ENCODE measurements at regions of chr12 and their contacts with region 1.

Region 1: GRCh38 chr12:65209655-65210043 is 40.3 kb downstream of the LEMD3 start:
- DNase-seq: no peak
- H3K4me3 Mint-ChIP-seq: peak overlapping the region; percentile 43
- H3K27ac Mint-ChIP-seq: peak overlapping the region; percentile 69
- H3K4me1 Mint-ChIP-seq: peaks cover 63% of the 10 kb centered on the region
- H3K27me3 Mint-ChIP-seq: no peaks in the 10 kb centered on the region

Region 2: GRCh38 chr12:65147312-65147905 is 62.2 kb before region 1 on chr12:
- CTCF ChIA-PET with region 1: no interaction called
- intact Hi-C with region 1: no loop called
- DNase-seq: no peak
- H3K4me3 Mint-ChIP-seq: no peak overlapping the region
- H3K27ac Mint-ChIP-seq: no peak overlapping the region
- H3K4me1 Mint-ChIP-seq: no peaks in the 10 kb centered on the region
- H3K27me3 Mint-ChIP-seq: peaks cover 25% of the 10 kb centered on the region

Region 3: GRCh38 chr12:65196762-65197567 is 12.7 kb before region 1 on chr12:
- CTCF ChIA-PET with region 1: interaction called, 3 read pairs
- intact Hi-C with region 1: loop called (anchors 1 kb)
- DNase-seq: no peak
- H3K4me3 Mint-ChIP-seq: no peak overlapping the region
- H3K27ac Mint-ChIP-seq: peak overlapping the region; percentile 28
- H3K4me1 Mint-ChIP-seq: peaks cover 66% of the 10 kb centered on the region
- H3K27me3 Mint-ChIP-seq: no peaks in the 10 kb centered on the region

Region 4: DNA sequence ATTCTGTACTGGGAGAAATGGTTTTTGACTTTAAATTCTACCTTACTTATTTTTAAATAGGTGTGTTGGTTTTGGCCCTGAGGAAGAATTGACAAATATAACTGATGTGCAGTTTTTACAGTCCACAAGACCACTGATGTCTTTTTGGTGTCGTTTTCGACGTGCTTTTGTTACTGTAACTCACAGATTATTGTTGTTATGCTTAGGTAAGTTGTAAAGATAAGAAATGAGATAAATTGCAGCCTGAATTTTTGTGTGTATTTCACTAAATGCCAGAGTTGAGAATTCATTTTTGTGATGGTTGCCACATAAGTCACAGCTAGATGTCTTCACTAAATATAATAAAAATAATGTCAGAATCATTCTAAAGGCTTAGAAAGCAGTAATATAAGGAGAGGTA is 29.0 kb after region 1 on chr12:
- CTCF ChIA-PET with region 1: no interaction called
- intact Hi-C with region 1: no loop called
- DNase-seq: no peak
- H3K4me3 Mint-ChIP-seq: no peak overlapping the region
- H3K27ac Mint-ChIP-seq: no peak overlapping the region
- H3K4me1 Mint-ChIP-seq: no peaks in the 10 kb centered on the region
- H3K27me3 Mint-ChIP-seq: no peaks in the 10 kb centered on the region

Region 5: DNA sequence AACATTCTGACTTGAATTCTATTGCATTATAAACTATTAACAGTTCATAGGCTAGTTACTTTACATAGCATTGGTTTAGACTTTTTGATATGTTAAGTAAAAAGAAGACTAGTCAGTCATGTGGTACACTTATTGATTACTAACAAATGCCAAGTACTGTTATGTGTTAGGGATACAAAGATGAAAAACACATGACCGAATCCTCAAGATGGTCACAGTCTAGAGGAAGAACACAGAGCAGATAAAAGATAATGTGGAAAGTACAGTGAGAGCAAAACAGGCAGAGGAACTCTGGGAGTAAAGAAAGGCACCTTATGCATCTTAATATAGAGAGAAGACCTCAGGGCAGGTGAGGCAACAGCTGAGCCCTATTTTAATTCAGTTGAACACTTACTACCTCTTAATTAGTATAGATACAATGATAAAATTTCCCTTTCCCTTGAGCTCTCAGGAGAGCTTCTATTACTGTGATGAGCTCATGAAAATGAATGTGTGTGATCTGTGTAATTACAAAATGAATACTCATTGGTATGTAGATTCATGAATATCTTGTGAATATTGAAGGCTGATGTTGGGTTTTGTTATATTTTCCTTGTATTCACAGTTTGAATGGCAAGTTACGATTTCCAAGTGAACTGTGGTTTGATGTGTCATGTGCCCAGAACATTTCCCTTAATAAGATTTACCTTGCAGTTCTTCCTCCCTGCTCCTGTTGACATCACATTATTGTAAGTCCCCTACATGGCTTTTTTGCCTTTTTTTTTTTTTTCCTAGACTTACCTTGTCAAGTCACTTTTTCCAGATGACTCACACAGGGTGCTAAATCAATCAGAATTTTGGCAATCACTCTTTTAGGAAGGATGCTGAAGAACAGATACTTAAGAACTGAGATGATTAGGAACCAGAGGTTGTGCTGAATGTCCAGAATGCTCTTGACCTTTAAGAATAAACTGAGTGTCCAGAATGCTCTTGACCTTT is 39.3 kb after region 1 on chr12:
- CTCF ChIA-PET with region 1: no interaction called
- intact Hi-C with region 1: loop called (anchors 2 kb)
- DNase-seq: peak; percentile 40
- H3K4me3 Mint-ChIP-seq: no peak overlapping the region
- H3K27ac Mint-ChIP-seq: peak overlapping the region; percentile 32
- H3K4me1 Mint-ChIP-seq: peaks cover 19% of the 10 kb centered on the region
- H3K27me3 Mint-ChIP-seq: no peaks in the 10 kb centered on the region

Region 6: GRCh38 chr12:65269603-65270002 is 60.0 kb after region 1 on chr12:
- CTCF ChIA-PET with region 1: no interaction called
- intact Hi-C with region 1: no loop called
- DNase-seq: no peak
- H3K4me3 Mint-ChIP-seq: no peak overlapping the region
- H3K27ac Mint-ChIP-seq: no peak overlapping the region
- H3K4me1 Mint-ChIP-seq: no peaks in the 10 kb centered on the region
- H3K27me3 Mint-ChIP-seq: peaks cover 18% of the 10 kb centered on the region